H1 (cell line): ENCODE measurements at regions of chr12 and their contacts with region 1.

Region 1: GRCh38 chr12:7933255-7933729 is 2.7 kb downstream of the SLC2A3 start:
- DNase-seq: peak; percentile 65 to 71
- H3K4me3 ChIP-seq: peak overlapping the region; percentile 83 to 98 (median 92); a peak in 5 of 8 replicates
- H3K27ac ChIP-seq: no peak overlapping the region
- H3K4me1 ChIP-seq: peaks cover 0 to 13% (median 3%) of the 10 kb centered on the region in 4 experiments; a peak in 4 of 7 replicates
- H3K27me3 ChIP-seq: no peaks in the 10 kb centered on the region
- CTCF ChIP-seq: peak; percentile 36 to 92 (median 82)
- EP300 ChIP-seq: no peak
- POLR2A ChIP-seq: peak in 1 of 2 experiments; percentile 50; a peak in 1 of 3 replicates
- RAD21 ChIP-seq: peak; percentile 77 to 82

Region 2: GRCh38 chr12:7859552-7859951 is 73.7 kb before region 1 on chr12:
- CTCF ChIA-PET with region 1: interaction called, 67 read pairs
- POLR2A ChIA-PET with region 1: interaction called, 7 read pairs
- DNase-seq: no peak
- H3K4me3 ChIP-seq: no peak overlapping the region
- H3K27ac ChIP-seq: no peak overlapping the region
- H3K4me1 ChIP-seq: peaks cover 0 to 11% (median 3%) of the 10 kb centered on the region in 4 experiments; a peak in 3 of 7 replicates
- H3K27me3 ChIP-seq: no peaks in the 10 kb centered on the region
- CTCF ChIP-seq: no peak
- EP300 ChIP-seq: no peak
- POLR2A ChIP-seq: no peak
- RAD21 ChIP-seq: no peak

Region 3: DNA sequence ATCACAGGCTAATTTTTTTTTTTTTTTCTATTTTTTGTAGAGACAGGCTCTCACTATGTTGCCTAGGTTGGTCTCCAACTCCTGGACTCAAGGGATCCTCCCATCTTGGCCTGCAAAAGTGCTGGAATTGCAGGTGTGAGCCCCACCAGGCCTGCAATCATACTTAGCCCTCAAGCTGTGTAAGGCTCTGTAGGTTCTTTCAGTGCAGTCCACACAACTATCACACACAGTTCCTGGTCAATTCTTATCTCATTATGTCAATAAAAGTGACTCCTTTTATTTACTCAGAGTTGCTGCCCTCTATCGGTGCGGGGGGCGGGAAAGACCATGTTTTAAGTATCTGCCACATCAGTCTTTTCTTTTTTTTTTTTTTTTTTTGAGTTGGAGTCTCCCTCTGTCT is 26.3 kb before region 1 on chr12:
- CTCF ChIA-PET with region 1: interaction called, 10 read pairs
- POLR2A ChIA-PET with region 1: interaction called, 11 read pairs
- DNase-seq: peak; percentile 49 to 58
- H3K4me3 ChIP-seq: no peak overlapping the region
- H3K27ac ChIP-seq: peak overlapping the region; percentile 82
- H3K4me1 ChIP-seq: peaks cover 2 to 12% (median 6%) of the 10 kb centered on the region in 4 experiments; a peak in 5 of 7 replicates
- H3K27me3 ChIP-seq: no peaks in the 10 kb centered on the region
- CTCF ChIP-seq: peak in 2 of 3 experiments; percentile 34 to 49; a peak in 3 of 4 replicates
- EP300 ChIP-seq: no peak
- POLR2A ChIP-seq: no peak
- RAD21 ChIP-seq: peak; percentile 33 to 56; a peak in 3 of 4 replicates

Region 4: DNA sequence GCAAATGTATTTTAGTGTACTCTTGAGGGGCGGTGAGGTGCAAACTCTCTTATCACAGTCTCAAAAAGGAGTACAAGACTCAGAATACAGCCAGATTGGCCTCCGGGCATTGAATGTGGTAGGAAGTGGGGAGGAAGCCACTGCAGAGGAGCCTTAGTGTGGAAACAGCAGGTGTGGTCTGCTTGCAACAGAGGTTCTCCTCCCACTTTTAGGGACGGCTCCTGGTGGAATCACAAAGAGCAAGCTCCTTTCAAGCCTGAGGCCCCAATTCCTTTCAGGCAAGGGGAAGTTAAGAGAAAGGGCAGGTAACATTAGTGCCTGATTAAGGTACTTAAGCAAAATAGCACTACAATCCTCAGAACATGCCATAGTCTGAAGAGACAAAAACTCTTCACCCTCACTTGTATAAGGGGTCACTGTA is 26.4 kb after region 1 on chr12:
- CTCF ChIA-PET with region 1: interaction called, 73 read pairs
- POLR2A ChIA-PET with region 1: interaction called, 300 read pairs
- DNase-seq: peak in 1 of 2 experiments; percentile 74
- H3K4me3 ChIP-seq: peak overlapping the region; percentile 11 to 63 (median 41); a peak in 5 of 8 replicates
- H3K27ac ChIP-seq: peak overlapping the region; percentile 57; the same call in 1 of the 2 replicates
- H3K4me1 ChIP-seq: peaks cover 0 to 6% (median 3%) of the 10 kb centered on the region in 4 experiments; a peak in 6 of 7 replicates
- H3K27me3 ChIP-seq: no peaks in the 10 kb centered on the region
- CTCF ChIP-seq: no peak
- EP300 ChIP-seq: no peak
- POLR2A ChIP-seq: 0 out of 3 replicates have a peak, but pooled peaks of 1 of the 2 experiments have one; percentile 31
- RAD21 ChIP-seq: peak in 1 of 2 experiments; percentile 4; a peak in 1 of 4 replicates

Region 5: DNA sequence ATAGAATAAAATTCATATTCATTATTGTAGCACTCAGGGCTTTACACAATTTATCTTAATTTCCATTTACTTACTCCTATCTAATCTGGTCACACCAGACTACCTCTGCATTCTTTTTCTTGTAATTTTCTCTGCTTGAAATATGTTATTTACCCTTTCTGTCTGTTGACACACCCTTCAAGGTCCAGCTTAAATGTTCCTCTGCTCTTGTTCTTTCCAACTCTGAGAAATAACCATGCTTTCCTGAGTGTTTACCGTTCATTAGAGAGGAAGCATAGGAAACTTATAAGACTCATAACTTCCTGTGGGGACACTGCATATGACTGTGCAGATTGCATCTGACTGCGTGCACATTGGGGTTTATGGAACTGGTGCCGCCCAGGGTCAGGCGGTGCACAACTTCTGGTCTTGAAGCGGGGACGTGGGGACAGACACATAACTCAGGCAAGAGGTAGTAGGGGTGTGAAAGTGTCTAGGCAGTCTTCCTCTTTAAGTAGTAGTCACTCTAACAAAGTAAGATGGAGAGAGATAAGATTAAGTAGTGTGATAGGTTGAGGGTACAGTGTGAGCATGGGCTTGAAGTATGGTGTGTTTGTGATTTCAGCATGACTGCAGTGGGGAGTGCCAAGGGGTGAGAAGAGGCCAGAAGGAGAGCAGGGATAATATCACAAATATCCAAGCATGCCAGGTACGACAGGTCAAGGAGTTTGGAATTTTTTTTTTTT is 56.7 kb after region 1 on chr12:
- CTCF ChIA-PET with region 1: interaction called, 66 read pairs
- POLR2A ChIA-PET with region 1: interaction called, 25 read pairs
- DNase-seq: no peak
- H3K4me3 ChIP-seq: no peak overlapping the region
- H3K27ac ChIP-seq: no peak overlapping the region
- H3K4me1 ChIP-seq: peaks cover 0 to 6% (median 2%) of the 10 kb centered on the region in 4 experiments; a peak in 5 of 7 replicates
- H3K27me3 ChIP-seq: no peaks in the 10 kb centered on the region
- CTCF ChIP-seq: no peak
- EP300 ChIP-seq: no peak
- POLR2A ChIP-seq: no peak
- RAD21 ChIP-seq: no peak